ENCODE measurements at regions of chr4 and their contacts with region 1.

Region 1: GRCh38 chr4:83217721-83218522 is 66.7 kb downstream of the COQ2 start:
- DNase-seq: peak; percentile 73
- H3K4me3 Mint-ChIP-seq: peak overlapping the region; percentile 66
- H3K27ac Mint-ChIP-seq: peak overlapping the region; percentile 91
- H3K4me1 Mint-ChIP-seq: peaks cover 81% of the 10 kb centered on the region
- H3K27me3 Mint-ChIP-seq: peaks cover 2% of the 10 kb centered on the region

Region 2: GRCh38 chr4:81494031-81494431 is 1723.9 kb before region 1 on chr4:
- intact Hi-C with region 1: loop called (anchors 10 kb)
- DNase-seq: no peak
- H3K4me3 Mint-ChIP-seq: peak overlapping the region; percentile 50
- H3K27ac Mint-ChIP-seq: peak overlapping the region; percentile 25
- H3K4me1 Mint-ChIP-seq: peaks cover 43% of the 10 kb centered on the region
- H3K27me3 Mint-ChIP-seq: peaks cover 10% of the 10 kb centered on the region

Region 3: DNA sequence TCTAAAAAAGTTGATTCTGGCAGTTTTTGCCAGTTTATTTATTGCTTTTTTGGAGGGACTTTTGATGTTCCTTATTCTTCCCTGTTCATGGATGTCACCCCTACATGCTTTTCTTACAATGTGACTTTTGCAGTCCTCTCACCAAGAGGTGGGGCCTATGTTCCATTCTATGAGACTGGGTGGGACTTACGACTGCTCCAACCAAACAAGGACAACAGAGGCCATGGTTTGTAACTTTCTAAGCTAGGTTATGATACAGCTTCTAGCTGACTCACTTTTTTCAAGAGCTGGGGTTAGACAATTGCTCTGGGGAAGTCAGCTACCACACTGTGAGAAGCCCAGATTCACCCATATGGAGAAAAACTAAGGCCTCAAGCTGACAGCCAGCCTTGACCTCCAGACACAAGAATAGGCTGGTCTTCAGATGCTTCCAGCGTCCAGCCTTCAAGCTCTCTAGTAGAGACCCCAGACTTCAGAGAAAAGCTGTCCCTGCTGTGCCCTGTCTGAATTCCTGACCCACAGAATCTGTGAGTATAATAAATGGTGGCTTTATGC is 748.1 kb before region 1 on chr4:
- intact Hi-C with region 1: no loop called
- DNase-seq: no peak
- H3K4me3 Mint-ChIP-seq: no peak overlapping the region
- H3K27ac Mint-ChIP-seq: no peak overlapping the region
- H3K4me1 Mint-ChIP-seq: no peaks in the 10 kb centered on the region
- H3K27me3 Mint-ChIP-seq: no peaks in the 10 kb centered on the region

Region 4: GRCh38 chr4:83012687-83013419 is 205.1 kb before region 1 on chr4:
- intact Hi-C with region 1: loop called (anchors 5 kb)
- DNase-seq: peak; percentile 97
- H3K4me3 Mint-ChIP-seq: peak overlapping the region; percentile 91
- H3K27ac Mint-ChIP-seq: peak overlapping the region; percentile 92
- H3K4me1 Mint-ChIP-seq: peaks cover 45% of the 10 kb centered on the region
- H3K27me3 Mint-ChIP-seq: no peaks in the 10 kb centered on the region

Region 5: DNA sequence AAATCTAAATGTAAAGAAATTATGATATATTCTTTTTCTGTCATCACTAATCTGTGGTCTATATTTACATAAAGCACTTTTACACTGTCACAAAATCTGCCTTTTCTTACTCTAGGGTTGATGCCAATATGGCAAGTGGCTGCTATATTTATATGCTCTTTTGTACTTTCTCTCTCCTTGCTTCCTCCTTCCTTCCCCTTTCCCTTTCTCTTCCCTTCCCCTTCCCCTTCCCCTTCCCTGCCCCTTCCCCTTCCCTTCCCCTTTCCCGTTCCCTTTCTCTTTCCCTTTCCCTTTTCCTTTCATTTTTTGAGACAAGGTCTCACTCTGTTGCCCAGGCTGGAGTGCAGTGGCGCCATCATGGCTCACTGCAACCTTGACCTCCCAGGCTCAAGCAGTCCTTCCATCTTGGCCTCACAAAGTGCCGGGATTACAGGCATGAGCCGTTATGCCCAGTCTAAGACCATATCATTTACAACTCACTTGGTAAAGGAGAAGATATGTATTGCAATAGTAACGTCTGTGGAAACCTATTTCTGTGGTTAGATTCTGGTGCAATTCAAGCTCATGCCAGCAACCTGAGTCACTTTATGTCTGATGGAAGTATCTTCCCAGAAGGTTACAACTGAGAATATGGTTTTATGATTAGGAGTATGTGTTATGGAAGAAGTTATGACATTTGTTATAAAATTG is 89.5 kb before region 1 on chr4:
- intact Hi-C with region 1: loop called (anchors 5 kb)
- DNase-seq: no peak
- H3K4me3 Mint-ChIP-seq: no peak overlapping the region
- H3K27ac Mint-ChIP-seq: no peak overlapping the region
- H3K4me1 Mint-ChIP-seq: peaks cover 28% of the 10 kb centered on the region
- H3K27me3 Mint-ChIP-seq: peaks cover 5% of the 10 kb centered on the region

Region 6: GRCh38 chr4:83252782-83253405 is 35.0 kb after region 1 on chr4:
- intact Hi-C with region 1: loop called (anchors 1 kb)
- DNase-seq: peak; percentile 62
- H3K4me3 Mint-ChIP-seq: no peak overlapping the region
- H3K27ac Mint-ChIP-seq: no peak overlapping the region
- H3K4me1 Mint-ChIP-seq: peaks cover 37% of the 10 kb centered on the region
- H3K27me3 Mint-ChIP-seq: peaks cover 7% of the 10 kb centered on the region

Region 7: GRCh38 chr4:83503974-83504373 is 286.1 kb after region 1 on chr4:
- intact Hi-C with region 1: no loop called
- DNase-seq: no peak
- H3K4me3 Mint-ChIP-seq: no peak overlapping the region
- H3K27ac Mint-ChIP-seq: no peak overlapping the region
- H3K4me1 Mint-ChIP-seq: peaks cover 6% of the 10 kb centered on the region
- H3K27me3 Mint-ChIP-seq: no peaks in the 10 kb centered on the region

Measured in activated T-helper 1 cell treated with anti-CD3 and anti-CD28 coated beads, Interleukin-12 subunit alpha, Interleukin-12 subunit beta, Interleukin-2, Interleukin-4 antibody, amounts not matched to agents 30 ng/mL and 10 ng/mL and 1 ng/mL, durations not matched to agents 14 hours and 24 hours and 36 hours (primary cell).